ENCODE measurements at regions of chrX and their contacts with region 1.

Region 1: GRCh38 chrX:25020905-25021449 is 5.2 kb upstream of the ARX start:
- DNase-seq: peak; percentile 42
- H3K4me3 Mint-ChIP-seq: no peak overlapping the region
- H3K27ac Mint-ChIP-seq: no peak overlapping the region
- H3K4me1 Mint-ChIP-seq: peaks cover 27% of the 10 kb centered on the region
- H3K27me3 Mint-ChIP-seq: peaks cover 58% of the 10 kb centered on the region

Region 2: DNA sequence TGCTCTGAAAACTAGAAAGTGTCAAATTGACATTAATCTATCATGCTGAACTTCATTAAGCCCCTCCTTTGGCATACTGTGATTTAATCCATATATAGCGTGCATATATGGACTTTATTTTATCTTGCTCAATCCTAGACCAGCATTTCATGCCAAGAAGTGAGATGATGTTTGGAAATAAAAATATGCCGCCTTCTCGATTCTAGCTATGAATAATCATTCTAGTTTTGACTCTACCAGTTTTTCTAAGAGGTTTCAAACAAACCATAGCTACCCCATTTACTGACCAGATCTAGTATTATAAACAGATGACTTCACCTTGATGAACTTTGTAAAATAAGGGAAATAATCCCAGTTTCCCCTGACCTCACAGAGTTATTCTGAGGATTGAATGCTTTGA is 100.2 kb before region 1 on chrX:
- CTCF ChIA-PET with region 1: no interaction called
- POLR2A ChIA-PET with region 1: no interaction called
- intact Hi-C with region 1: no loop called
- DNase-seq: no peak
- H3K4me3 Mint-ChIP-seq: no peak overlapping the region
- H3K27ac Mint-ChIP-seq: no peak overlapping the region
- H3K4me1 Mint-ChIP-seq: peaks cover 18% of the 10 kb centered on the region
- H3K27me3 Mint-ChIP-seq: no peaks in the 10 kb centered on the region

Region 3: DNA sequence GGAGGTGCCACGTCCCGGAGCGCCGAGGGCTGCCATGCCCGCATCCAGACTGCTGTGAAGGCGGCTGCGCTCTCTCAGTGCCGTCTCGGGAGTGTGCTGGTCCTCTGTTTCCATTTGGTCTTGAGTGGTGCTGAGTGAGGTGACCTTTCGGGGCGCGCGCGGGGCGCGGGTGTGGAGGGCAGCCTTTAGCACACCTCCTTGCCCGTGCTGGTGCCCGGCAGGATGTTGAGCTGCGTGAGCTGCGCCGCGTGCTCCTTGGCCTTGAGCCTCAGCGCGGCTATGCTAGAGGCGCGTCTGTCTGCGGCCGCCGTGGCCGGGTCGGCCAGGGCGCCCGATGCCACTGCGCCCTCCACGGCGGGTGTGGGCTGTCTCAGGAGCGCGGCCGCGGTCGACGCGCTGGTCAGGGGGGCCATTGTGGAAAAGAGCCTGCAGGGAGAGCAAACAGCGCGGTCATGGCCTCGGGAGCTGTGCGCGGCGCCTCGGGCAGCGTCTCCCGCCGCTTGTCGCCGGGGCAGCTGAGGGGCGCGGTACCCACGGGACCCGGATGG is 16.4 kb before region 1 on chrX:
- CTCF ChIA-PET with region 1: interaction called, 7 read pairs
- POLR2A ChIA-PET with region 1: no interaction called
- intact Hi-C with region 1: loop called (anchors 1 kb)
- DNase-seq: no peak
- H3K4me3 Mint-ChIP-seq: no peak overlapping the region
- H3K27ac Mint-ChIP-seq: no peak overlapping the region
- H3K4me1 Mint-ChIP-seq: peaks cover 19% of the 10 kb centered on the region
- H3K27me3 Mint-ChIP-seq: peaks cover 38% of the 10 kb centered on the region

Measured in activated CD4-positive, alpha-beta memory T cell treated with anti-CD3 and anti-CD28 coated beads for 36 hours (primary cell).